ENCODE measurements at regions of chr3 and their contacts with region 1.

Region 1: GRCh38 chr3:150106740-150107428 is 136.2 kb upstream of the PFN2 start:
- DNase-seq: peak; percentile 81
- ATAC-seq: peak; percentile 99
- H3K4me3 ChIP-seq: no peak overlapping the region
- H3K27ac ChIP-seq: peak overlapping the region; percentile 36
- H3K4me1 ChIP-seq: peaks cover 27% of the 10 kb centered on the region
- H3K27me3 ChIP-seq: no peaks in the 10 kb centered on the region
- CTCF ChIP-seq: no peak

Region 2: DNA sequence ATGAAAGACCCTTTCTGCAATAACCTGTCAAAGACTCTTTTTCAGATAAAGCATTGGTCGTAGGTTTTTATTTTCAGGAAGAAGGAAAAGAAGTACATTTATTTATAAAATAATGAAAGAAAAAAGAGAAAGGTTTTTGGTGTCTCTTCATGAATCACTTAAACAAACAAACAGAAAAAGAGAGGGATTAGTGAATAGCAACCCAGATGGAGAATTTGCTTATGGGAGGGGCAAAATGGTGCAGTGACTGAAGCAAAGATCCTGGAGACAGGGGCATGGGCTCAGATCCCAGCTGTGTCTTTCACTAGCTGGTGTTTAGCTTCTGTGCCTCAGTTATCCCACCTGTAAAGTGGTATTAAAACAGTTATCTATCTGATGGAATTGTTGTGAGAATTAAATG is 57.6 kb before region 1 on chr3:
- CTCF ChIA-PET with region 1: no interaction called
- POLR2A ChIA-PET with region 1: no interaction called
- intact Hi-C with region 1: no loop called
- DNase-seq: peak; percentile 38
- ATAC-seq: peak; percentile 69
- H3K4me3 ChIP-seq: no peak overlapping the region
- H3K27ac ChIP-seq: no peak overlapping the region
- H3K4me1 ChIP-seq: peaks cover 18% of the 10 kb centered on the region
- H3K27me3 ChIP-seq: no peaks in the 10 kb centered on the region
- CTCF ChIP-seq: no peak

Region 3: GRCh38 chr3:150079029-150079739 is 27.7 kb before region 1 on chr3:
- CTCF ChIA-PET with region 1: no interaction called
- POLR2A ChIA-PET with region 1: no interaction called
- intact Hi-C with region 1: loop called (anchors 2 kb)
- DNase-seq: peak; percentile 91
- ATAC-seq: peak; percentile 74
- H3K4me3 ChIP-seq: no peak overlapping the region
- H3K27ac ChIP-seq: peak overlapping the region; percentile 84
- H3K4me1 ChIP-seq: peaks cover 59% of the 10 kb centered on the region
- H3K27me3 ChIP-seq: no peaks in the 10 kb centered on the region
- CTCF ChIP-seq: no peak